HepG2 (cell line): ENCODE measurements at regions of chr21 and their contacts with region 1.

Region 1: GRCh38 chr21:20259031-20259867 is 739.0 kb upstream of the NCAM2 start:
- DNase-seq: no peak
- ATAC-seq: no peak
- H3K4me3 ChIP-seq: no peak overlapping the region
- H3K27ac ChIP-seq: no peak overlapping the region
- H3K4me1 ChIP-seq: no peaks in the 10 kb centered on the region
- H3K27me3 ChIP-seq: no peaks in the 10 kb centered on the region
- CTCF ChIP-seq: no peak
- EP300 ChIP-seq: no peak
- POLR2A ChIP-seq: no peak
- RAD21 ChIP-seq: no peak

Region 2: GRCh38 chr21:20486303-20486702 is 227.1 kb after region 1 on chr21:
- CTCF ChIA-PET with region 1: no interaction called
- POLR2A ChIA-PET with region 1: no interaction called
- in situ Hi-C with region 1: no loop called
- intact Hi-C with region 1: loop called (anchors 5 kb)
- DNase-seq: no peak
- ATAC-seq: no peak
- H3K4me3 ChIP-seq: no peak overlapping the region
- H3K27ac ChIP-seq: no peak overlapping the region
- H3K4me1 ChIP-seq: no peaks in the 10 kb centered on the region
- H3K27me3 ChIP-seq: no peaks in the 10 kb centered on the region
- CTCF ChIP-seq: no peak
- EP300 ChIP-seq: no peak
- POLR2A ChIP-seq: no peak
- RAD21 ChIP-seq: no peak